Lower leg skin (tissue), 4 donors: ENCODE measurements at regions of chr12 and their contacts with region 1.

Region 1: DNA sequence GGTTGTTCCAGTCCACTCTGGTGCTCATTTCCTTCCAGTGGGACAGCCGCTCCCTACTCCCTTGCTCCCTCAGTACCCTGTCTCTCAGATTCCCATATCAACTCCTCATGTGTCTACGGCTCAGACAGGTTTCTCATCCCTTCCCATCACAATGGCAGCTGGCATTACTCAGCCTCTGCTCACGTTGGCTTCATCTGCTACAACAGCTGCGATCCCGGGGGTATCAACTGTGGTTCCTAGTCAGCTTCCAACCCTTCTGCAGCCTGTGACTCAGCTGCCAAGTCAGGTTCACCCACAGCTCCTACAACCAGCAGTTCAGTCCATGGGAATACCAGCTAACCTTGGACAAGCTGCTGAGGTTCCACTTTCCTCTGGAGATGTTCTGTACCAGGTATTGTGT is 69.9 kb downstream of the RAD52 start:
- DNase-seq: no peak
- H3K4me3 ChIP-seq: no peak overlapping the region
- CTCF ChIP-seq: no peak
- POLR2A ChIP-seq: no peak

Region 2: GRCh38 chr12:484117-484516 is 395.5 kb before region 1 on chr12:
- intact Hi-C with region 1: no loop called
- DNase-seq: peak in 1 of 2 donors; percentile 67
- H3K4me3 ChIP-seq: no peak overlapping the region
- CTCF ChIP-seq: no peak
- POLR2A ChIP-seq: no peak

Region 3: DNA sequence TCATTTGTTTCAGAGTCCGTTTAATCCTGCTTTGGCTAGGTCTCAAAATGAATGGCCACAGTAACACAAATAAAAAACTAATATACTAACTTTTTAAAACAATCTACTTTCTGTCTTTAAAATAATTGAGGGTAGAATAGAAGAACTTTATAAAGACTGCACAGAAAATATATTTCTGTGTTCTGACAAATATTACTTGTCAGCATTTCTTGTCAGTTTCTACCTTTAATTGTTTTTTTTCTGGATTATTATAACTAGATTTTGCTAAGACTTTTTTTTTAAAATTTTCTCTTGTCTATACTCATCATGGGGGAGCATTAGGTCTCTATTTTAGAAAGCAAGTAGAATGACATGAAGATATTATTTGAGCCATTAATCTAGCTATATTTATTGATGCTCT is 16.4 kb before region 1 on chr12:
- intact Hi-C with region 1: loop called (anchors 1 kb)
- DNase-seq: no peak
- H3K4me3 ChIP-seq: no peak overlapping the region
- CTCF ChIP-seq: no peak
- POLR2A ChIP-seq: no peak

Region 4: DNA sequence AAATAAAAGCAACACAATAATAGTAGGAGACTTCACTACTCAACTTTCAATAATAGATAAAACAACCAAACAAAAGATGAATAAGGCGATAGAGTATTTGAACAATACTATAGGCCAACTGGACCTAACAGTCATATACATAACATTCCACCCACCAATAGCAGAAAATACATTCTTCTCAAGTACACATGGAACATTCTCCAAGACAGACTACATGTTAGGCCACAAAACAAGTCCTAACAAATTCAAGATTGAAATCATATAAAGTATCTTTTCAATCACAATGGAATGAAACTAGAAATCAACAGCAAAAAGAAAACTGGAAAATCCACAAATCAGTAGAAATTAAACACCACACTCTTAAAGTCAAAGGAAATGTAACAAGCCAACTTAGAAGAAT is 41.0 kb after region 1 on chr12:
- intact Hi-C with region 1: loop called (anchors 10 kb)
- DNase-seq: no peak
- H3K4me3 ChIP-seq: no peak overlapping the region
- CTCF ChIP-seq: no peak
- POLR2A ChIP-seq: no peak

Region 5: DNA sequence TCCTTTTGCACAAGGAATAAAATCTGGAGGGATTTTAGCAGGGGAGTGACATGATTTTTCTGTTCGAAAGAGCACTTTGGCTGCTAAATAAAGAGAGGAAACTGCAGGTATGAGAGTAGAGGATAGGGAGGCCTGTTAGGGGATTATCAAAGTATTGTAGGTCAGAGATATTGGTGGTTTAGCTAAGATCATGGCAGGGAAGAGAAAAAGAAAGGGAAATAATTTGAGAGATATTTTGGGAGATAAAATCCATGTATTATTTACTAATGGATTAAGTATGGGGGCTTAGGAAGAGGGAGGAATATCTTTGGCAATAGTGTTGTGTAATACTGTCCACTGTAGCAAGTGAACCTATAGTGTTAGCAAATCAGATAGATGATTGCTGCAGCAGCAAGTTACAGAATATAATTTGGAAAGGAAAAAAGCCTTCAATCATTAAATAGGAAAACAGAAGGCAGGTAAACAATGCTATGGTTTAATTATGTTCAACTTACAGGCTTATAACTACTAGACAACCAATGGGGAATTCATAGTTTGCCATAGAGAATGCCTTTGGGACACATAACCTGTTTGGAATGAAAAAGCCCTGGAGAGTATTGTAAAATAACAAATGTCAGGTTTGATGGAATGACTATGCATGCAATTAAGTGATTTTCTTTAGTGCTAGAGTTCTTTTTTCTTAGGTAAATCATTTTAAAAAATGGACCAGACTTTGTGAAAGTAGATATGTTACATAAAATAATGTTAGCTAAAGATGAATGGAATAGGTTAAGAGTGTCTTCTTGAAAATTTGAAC is 861.7 kb after region 1 on chr12:
- intact Hi-C with region 1: no loop called
- DNase-seq: no peak
- H3K4me3 ChIP-seq: no peak overlapping the region
- CTCF ChIP-seq: no peak
- POLR2A ChIP-seq: no peak